Dendritic cell treated with granulocyte-macrophage colony-stimulating factor and Interleukin-4, amounts not matched to agents 40 ng/mL and 50 ng/mL, for 4 days (primary cell): ENCODE measurements at regions of chr10 and their contacts with region 1.

Region 1: DNA sequence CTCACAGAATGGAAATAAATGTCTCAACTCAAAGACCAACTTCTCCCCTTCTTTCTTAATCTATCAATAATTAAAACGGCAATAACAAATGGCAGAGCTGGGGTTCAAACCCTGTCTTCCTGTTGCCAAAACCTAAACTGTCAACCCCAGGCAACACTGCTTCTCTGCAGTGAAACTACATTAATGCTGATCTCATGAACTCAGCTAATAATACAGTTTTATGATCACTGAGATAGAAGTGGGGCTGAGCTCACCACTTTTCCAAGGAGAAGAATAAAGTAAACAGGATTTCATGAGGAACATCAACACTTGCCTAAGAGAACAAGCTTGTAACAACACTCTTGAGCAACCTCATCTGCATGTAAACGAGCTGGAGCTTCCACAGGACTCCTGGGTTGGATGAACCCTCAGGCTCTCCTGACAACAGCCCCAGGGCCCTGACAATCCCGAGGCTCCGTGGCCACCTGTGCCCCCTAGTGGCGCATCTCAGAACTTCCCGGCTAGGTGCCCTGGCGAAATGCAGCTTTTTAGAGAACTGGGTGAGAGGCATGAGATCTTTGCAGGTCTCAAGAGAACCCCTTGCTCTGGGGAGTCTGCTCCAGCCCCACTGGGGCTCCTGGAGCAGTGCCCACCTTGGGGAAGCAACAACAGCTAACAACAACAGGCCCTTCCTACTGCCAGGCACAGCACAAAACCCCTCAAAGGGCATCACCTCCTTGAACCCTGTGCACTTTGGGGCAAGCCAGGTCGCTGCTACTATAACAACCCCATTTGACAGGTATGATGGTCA is 169.3 kb downstream of the SH3PXD2A start:
- H3K4me3 Mint-ChIP-seq: no peak overlapping the region
- H3K27ac Mint-ChIP-seq: no peak overlapping the region
- H3K4me1 Mint-ChIP-seq: peaks cover 20% of the 10 kb centered on the region
- H3K27me3 Mint-ChIP-seq: peaks cover 24% of the 10 kb centered on the region

Region 2: DNA sequence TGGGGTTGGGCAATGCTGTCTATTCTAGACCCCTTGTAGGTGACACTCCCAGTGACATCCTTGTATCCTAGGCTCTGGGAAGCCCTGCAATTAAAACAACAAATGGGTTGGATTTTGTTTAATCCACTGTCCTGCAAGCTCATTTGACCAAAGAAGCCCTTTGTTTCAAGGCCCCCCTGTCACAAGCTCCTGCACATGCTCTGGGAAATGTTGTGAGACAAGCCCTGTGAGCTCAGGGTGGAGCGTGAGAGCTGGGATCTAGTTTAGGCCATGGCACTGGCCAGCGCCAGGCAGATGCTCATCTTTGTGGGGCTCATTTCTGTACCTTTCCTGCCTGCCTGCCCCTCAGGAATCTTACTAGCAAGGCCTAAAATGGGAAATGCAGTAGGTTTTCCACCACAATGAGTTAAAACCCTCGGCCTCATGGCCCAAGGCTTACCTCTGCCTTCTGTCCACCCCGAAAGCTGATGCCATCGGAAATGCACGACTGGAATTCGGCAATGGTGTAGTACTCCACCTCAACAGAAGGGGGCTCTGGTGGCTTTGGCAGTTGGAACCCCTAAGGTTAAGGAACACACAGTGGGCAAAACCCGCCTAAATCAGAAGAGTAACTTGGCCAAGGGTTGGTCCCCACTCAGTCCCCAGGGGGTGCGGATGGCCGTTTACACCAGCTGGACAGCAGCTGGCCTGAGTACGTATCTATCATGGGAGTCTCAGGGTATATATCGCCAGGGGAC is 80.5 kb before region 1 on chr10:
- intact Hi-C with region 1: loop called (anchors 1 kb)
- H3K4me3 Mint-ChIP-seq: no peak overlapping the region
- H3K27ac Mint-ChIP-seq: no peak overlapping the region
- H3K4me1 Mint-ChIP-seq: no peaks in the 10 kb centered on the region
- H3K27me3 Mint-ChIP-seq: no peaks in the 10 kb centered on the region